CD4-positive, alpha-beta T cell (primary cell): ENCODE measurements at regions of chr19 and their contacts with region 1.

Region 1: GRCh38 chr19:6218491-6219162 is 61.1 kb downstream of the MLLT1 start:
- DNase-seq: peak; percentile 70 to 86 (median 80)
- ATAC-seq: peak; percentile 92
- H3K4me3 ChIP-seq: no peak overlapping the region
- H3K4me3 Mint-ChIP-seq: no peak overlapping the region
- H3K27ac ChIP-seq: no peak overlapping the region
- H3K27ac Mint-ChIP-seq: no peak overlapping the region
- H3K4me1 ChIP-seq: peaks cover 3% of the 10 kb centered on the region
- H3K4me1 Mint-ChIP-seq: peaks cover 4% of the 10 kb centered on the region
- H3K27me3 ChIP-seq: no peaks in the 10 kb centered on the region
- H3K27me3 Mint-ChIP-seq: no peaks in the 10 kb centered on the region
- CTCF ChIP-seq: peak; percentile 85

Region 2: DNA sequence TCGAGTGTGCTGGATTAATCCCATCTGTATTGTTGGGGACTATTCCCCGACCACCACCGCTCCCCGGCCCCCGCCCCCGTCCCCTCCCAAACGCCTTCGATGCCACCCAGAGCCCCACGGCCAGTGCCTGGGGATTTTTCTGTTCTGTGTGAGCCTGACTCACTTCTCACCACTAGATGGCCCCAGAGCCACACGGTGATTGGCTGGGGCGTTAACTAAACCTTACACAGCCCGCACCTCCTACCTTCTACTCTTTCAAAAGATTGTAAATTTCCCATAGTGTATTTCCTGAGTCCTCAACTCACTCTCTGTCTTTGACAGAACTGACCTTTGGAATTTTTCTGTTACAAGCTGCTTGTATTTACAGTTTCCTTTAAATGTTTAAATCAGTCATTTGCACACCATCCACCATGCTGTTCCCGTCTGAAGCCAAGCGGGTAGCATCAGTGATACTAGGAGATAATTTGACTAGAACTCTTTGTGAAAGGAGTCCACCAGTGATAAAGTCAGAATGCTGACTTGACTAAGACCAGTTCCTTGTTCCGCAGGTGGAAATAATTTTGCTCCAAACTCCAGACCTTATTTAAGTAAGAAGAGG is 169.7 kb before region 1 on chr19:
- CTCF ChIA-PET with region 1: interaction called, 6 read pairs
- POLR2A ChIA-PET with region 1: no interaction called
- intact Hi-C with region 1: loop called in 1 of 2 experiments (anchors 5 kb)
- DNase-seq: peak; percentile 65 to 90 (median 74)
- ATAC-seq: peak; percentile 99
- H3K4me3 ChIP-seq: no peak overlapping the region
- H3K4me3 Mint-ChIP-seq: no peak overlapping the region
- H3K27ac ChIP-seq: no peak overlapping the region
- H3K27ac Mint-ChIP-seq: no peak overlapping the region
- H3K4me1 ChIP-seq: peaks cover 3% of the 10 kb centered on the region
- H3K4me1 Mint-ChIP-seq: peaks cover 6% of the 10 kb centered on the region
- H3K27me3 ChIP-seq: no peaks in the 10 kb centered on the region
- H3K27me3 Mint-ChIP-seq: peaks cover 7% of the 10 kb centered on the region
- CTCF ChIP-seq: peak; percentile 91

Region 3: GRCh38 chr19:6297202-6297601 is 78.6 kb after region 1 on chr19:
- CTCF ChIA-PET with region 1: interaction called, 6 read pairs
- POLR2A ChIA-PET with region 1: no interaction called
- intact Hi-C with region 1: loop called in 1 of 2 experiments (anchors 2 kb)
- DNase-seq: no peak
- ATAC-seq: no peak
- H3K4me3 ChIP-seq: no peak overlapping the region
- H3K4me3 Mint-ChIP-seq: no peak overlapping the region
- H3K27ac ChIP-seq: no peak overlapping the region
- H3K27ac Mint-ChIP-seq: no peak overlapping the region
- H3K4me1 ChIP-seq: no peaks in the 10 kb centered on the region
- H3K4me1 Mint-ChIP-seq: no peaks in the 10 kb centered on the region
- H3K27me3 ChIP-seq: no peaks in the 10 kb centered on the region
- H3K27me3 Mint-ChIP-seq: no peaks in the 10 kb centered on the region
- CTCF ChIP-seq: no peak

Region 4: DNA sequence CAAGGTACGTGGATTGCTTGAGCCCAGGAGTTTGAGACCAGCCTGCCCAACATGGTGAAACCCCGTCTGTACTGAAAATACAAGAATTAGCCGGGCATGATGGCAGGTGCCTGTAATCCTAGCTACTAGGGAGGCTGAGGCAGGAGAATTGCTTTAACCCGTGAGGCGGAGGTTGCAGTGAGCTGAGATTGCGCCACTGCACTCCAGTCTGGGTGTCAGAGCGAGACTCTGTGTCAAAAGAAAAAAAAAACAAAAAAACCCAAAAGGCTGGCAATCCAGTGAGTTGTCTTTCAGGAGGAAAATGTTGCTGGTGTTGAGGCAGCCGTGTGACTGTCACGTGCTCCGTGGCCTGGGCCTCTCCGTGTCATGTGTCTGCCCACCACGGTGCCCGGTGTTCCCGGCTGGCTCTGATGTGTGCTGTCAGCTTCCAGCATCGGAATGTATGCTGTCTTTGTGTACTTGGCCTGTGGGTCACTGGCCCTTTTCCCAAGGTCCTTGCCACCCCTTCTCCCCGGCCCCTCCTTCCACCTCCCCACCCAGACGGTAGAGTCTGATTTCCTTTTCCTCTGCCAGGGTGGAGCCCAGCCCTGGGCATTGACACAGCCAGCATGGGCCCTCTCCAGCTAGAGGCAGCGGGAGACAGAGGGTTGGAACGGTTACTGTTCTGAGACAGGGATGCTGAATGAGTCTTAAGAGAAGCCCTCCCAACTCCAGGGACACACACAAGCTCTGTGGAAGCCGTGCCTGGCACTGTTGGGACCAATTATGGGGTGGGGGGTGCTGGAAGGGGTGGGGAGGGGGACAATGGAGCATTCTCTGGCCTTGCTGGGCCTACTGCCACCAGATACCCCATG is 290.7 kb after region 1 on chr19:
- CTCF ChIA-PET with region 1: no interaction called
- POLR2A ChIA-PET with region 1: no interaction called
- intact Hi-C with region 1: loop called in 1 of 2 experiments (anchors 5 kb)
- DNase-seq: no peak
- ATAC-seq: no peak
- H3K4me3 ChIP-seq: no peak overlapping the region
- H3K4me3 Mint-ChIP-seq: no peak overlapping the region
- H3K27ac ChIP-seq: no peak overlapping the region
- H3K27ac Mint-ChIP-seq: no peak overlapping the region
- H3K4me1 ChIP-seq: peaks cover 6% of the 10 kb centered on the region
- H3K4me1 Mint-ChIP-seq: peaks cover 6% of the 10 kb centered on the region
- H3K27me3 ChIP-seq: no peaks in the 10 kb centered on the region
- H3K27me3 Mint-ChIP-seq: peaks cover 6% of the 10 kb centered on the region
- CTCF ChIP-seq: no peak